Heart left ventricle (tissue), 16 donors: ENCODE measurements at regions of chr3 and their contacts with region 1.

Region 1: GRCh38 chr3:58018892-58019742 is 10.9 kb downstream of the FLNB start:
- DNase-seq: no peak
- ATAC-seq: no peak
- H3K4me3 ChIP-seq: no peak overlapping the region
- H3K27ac ChIP-seq: peak overlapping the region in 8 of 12 donors; percentile 18 to 87 (median 70)
- H3K4me1 ChIP-seq: peaks cover 0 to 76% (median 31%) of the 10 kb centered on the region in 12 donors
- H3K27me3 ChIP-seq: no peaks in the 10 kb centered on the region
- CTCF ChIP-seq: no peak
- POLR2A ChIP-seq: no peak

Region 2: DNA sequence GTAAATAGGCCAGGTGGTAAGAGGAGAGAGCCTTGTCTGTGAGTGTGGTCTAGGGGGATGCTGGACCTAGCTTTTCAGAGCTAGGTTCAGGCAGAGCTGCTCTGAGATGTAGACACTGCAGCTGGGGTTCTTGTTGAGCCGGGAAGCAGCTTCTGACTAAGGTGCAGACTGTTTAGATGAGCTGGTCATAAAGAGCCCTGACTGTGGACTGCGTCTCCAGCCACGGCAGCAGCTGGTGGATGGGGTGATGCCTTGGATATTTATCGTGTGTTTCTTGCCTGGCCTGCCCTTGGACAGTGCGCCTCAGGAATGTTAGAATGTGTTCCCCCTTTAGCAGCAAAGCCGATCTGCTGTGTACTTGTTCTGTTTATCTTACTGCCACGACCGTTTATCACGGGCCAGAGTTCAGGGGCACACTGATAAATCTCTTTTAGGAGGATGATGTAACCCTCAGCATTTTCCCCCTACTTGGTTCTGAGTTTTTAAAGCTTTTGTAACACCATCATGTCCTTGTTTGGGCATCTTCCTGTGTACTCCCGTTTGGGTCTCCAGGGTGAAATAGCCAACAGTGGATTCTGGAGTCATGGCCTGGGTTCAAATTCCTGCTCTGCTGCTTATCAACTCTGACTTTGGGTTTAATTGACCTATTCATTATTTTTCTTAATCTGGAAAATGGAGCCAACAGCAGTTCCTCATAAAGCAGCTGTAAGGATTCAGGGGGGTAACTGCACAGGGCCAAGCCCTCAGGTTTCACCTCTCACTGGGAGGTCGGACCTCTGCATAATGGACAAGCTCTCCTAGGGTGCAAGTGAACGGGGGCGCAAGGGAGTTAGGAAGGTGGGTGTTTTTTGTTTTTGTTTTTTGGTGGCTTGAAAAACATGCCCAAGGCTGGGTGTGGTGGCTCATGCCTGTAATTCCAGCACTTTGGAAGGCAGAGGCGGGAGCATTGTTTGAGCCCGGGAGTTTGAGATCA is 40.5 kb after region 1 on chr3:
- intact Hi-C with region 1: loop called in 3 of 10 experiments (anchors 5 to 10 kb)
- DNase-seq: peak in 2 of 5 donors; percentile 31 to 50
- ATAC-seq: peak; percentile 58 to 75 (median 66)
- H3K4me3 ChIP-seq: no peak overlapping the region
- H3K27ac ChIP-seq: peak overlapping the region in 9 of 12 donors; percentile 4 to 82 (median 53)
- H3K4me1 ChIP-seq: peaks cover 0 to 61% (median 36%) of the 10 kb centered on the region in 12 donors
- H3K27me3 ChIP-seq: no peaks in the 10 kb centered on the region
- CTCF ChIP-seq: no peak
- POLR2A ChIP-seq: no peak

Region 3: GRCh38 chr3:58317811-58318210 is 298.7 kb after region 1 on chr3:
- intact Hi-C with region 1: no loop called
- DNase-seq: no peak
- ATAC-seq: no peak
- H3K4me3 ChIP-seq: no peak overlapping the region
- H3K27ac ChIP-seq: peak overlapping the region in 1 of 12 donors; percentile 76
- H3K4me1 ChIP-seq: peaks cover 0 to 15% (median 3%) of the 10 kb centered on the region in 12 donors
- H3K27me3 ChIP-seq: no peaks in the 10 kb centered on the region
- CTCF ChIP-seq: no peak
- POLR2A ChIP-seq: no peak